ENCODE measurements at regions of chr22 and their contacts with region 1.

Region 1: GRCh38 chr22:36481393-36482168 is at the start of gene TXN2:
- DNase-seq: peak; percentile 98
- ATAC-seq: peak; percentile 87
- H3K4me3 ChIP-seq: peak within 1 kb of the TSS; percentile 82 to 90 (median 86)
- H3K4me3 Mint-ChIP-seq: peak within 1 kb of the TSS; percentile 95
- H3K27ac ChIP-seq: peak within 1 kb of the TSS; percentile 95 to 98
- H3K27ac Mint-ChIP-seq: peak within 1 kb of the TSS; percentile 93
- H3K4me1 ChIP-seq: peaks cover 11 to 18% of the 10 kb centered on the region in 2 donors
- H3K4me1 Mint-ChIP-seq: peaks cover 17% of the 10 kb centered on the region
- H3K27me3 ChIP-seq: no peaks in the 10 kb centered on the region
- H3K27me3 Mint-ChIP-seq: no peaks in the 10 kb centered on the region
- CTCF ChIP-seq: no peak
- total RNA-seq, gene TXN2: 37.4 and 39.6 TPM in 2 replicates

Region 2: GRCh38 chr22:36454916-36455570 is 26.5 kb before region 1 on chr22:
- CTCF ChIA-PET with region 1: interaction called, 3 read pairs
- POLR2A ChIA-PET with region 1: interaction called, 9 read pairs
- intact Hi-C with region 1: loop called (anchors 1 kb)
- DNase-seq: peak; percentile 96
- ATAC-seq: peak; percentile 62
- H3K4me3 ChIP-seq: peak overlapping the region; percentile 18 to 59 (median 54)
- H3K4me3 Mint-ChIP-seq: peak overlapping the region; percentile 77
- H3K27ac ChIP-seq: peak overlapping the region; percentile 84 to 93
- H3K27ac Mint-ChIP-seq: peak overlapping the region; percentile 91
- H3K4me1 ChIP-seq: peaks cover 50 to 60% of the 10 kb centered on the region in 2 donors
- H3K4me1 Mint-ChIP-seq: peaks cover 45% of the 10 kb centered on the region
- H3K27me3 ChIP-seq: no peaks in the 10 kb centered on the region
- H3K27me3 Mint-ChIP-seq: no peaks in the 10 kb centered on the region
- CTCF ChIP-seq: no peak

Region 3: GRCh38 chr22:36506637-36507517 is 25.3 kb after region 1 on chr22 and contains the start of gene FOXRED2:
- CTCF ChIA-PET with region 1: interaction called, 6 read pairs
- POLR2A ChIA-PET with region 1: interaction called, 6 read pairs
- intact Hi-C with region 1: loop called (anchors 1 kb)
- DNase-seq: peak; percentile 92
- ATAC-seq: peak; percentile 98
- H3K4me3 ChIP-seq: peak within 1 kb of the TSS; percentile 26 to 80 (median 59)
- H3K4me3 Mint-ChIP-seq: peak within 1 kb of the TSS; percentile 77
- H3K27ac ChIP-seq: peak within 1 kb of the TSS; percentile 43 to 68
- H3K27ac Mint-ChIP-seq: peak within 1 kb of the TSS; percentile 56
- H3K4me1 ChIP-seq: peaks cover 10 to 13% of the 10 kb centered on the region in 2 donors
- H3K4me1 Mint-ChIP-seq: peaks cover 11% of the 10 kb centered on the region
- H3K27me3 ChIP-seq: no peaks in the 10 kb centered on the region
- H3K27me3 Mint-ChIP-seq: no peaks in the 10 kb centered on the region
- CTCF ChIP-seq: no peak
- total RNA-seq, gene FOXRED2: 7.1 and 7.4 TPM in 2 replicates

Region 4: GRCh38 chr22:37486224-37486845 is 1004.8 kb after region 1 on chr22 and contains the start of gene MFNG:
- CTCF ChIA-PET with region 1: no interaction called
- POLR2A ChIA-PET with region 1: interaction called, 11 read pairs
- intact Hi-C with region 1: no loop called
- DNase-seq: peak; percentile 86
- ATAC-seq: peak; percentile 78
- H3K4me3 ChIP-seq: peak within 1 kb of the TSS; percentile 63 to 91 (median 80)
- H3K4me3 Mint-ChIP-seq: peak within 1 kb of the TSS; percentile 98
- H3K27ac ChIP-seq: peak within 1 kb of the TSS; percentile 70 to 93
- H3K27ac Mint-ChIP-seq: peak within 1 kb of the TSS; percentile 98
- H3K4me1 ChIP-seq: peaks cover 24 to 47% of the 10 kb centered on the region in 2 donors
- H3K4me1 Mint-ChIP-seq: peaks cover 55% of the 10 kb centered on the region
- H3K27me3 ChIP-seq: no peaks in the 10 kb centered on the region
- H3K27me3 Mint-ChIP-seq: no peaks in the 10 kb centered on the region
- CTCF ChIP-seq: no peak
- total RNA-seq, gene MFNG: 95.9 and 109 TPM in 2 replicates

Measured in B cell (primary cell).